Activated CD4-positive, alpha-beta memory T cell treated with anti-CD3 and anti-CD28 coated beads, Interleukin-2, amount 10 ng/mL, durations not matched to agents 7 days and 5 days (primary cell): ENCODE measurements at regions of chr16 and their contacts with region 1.

Region 1: DNA sequence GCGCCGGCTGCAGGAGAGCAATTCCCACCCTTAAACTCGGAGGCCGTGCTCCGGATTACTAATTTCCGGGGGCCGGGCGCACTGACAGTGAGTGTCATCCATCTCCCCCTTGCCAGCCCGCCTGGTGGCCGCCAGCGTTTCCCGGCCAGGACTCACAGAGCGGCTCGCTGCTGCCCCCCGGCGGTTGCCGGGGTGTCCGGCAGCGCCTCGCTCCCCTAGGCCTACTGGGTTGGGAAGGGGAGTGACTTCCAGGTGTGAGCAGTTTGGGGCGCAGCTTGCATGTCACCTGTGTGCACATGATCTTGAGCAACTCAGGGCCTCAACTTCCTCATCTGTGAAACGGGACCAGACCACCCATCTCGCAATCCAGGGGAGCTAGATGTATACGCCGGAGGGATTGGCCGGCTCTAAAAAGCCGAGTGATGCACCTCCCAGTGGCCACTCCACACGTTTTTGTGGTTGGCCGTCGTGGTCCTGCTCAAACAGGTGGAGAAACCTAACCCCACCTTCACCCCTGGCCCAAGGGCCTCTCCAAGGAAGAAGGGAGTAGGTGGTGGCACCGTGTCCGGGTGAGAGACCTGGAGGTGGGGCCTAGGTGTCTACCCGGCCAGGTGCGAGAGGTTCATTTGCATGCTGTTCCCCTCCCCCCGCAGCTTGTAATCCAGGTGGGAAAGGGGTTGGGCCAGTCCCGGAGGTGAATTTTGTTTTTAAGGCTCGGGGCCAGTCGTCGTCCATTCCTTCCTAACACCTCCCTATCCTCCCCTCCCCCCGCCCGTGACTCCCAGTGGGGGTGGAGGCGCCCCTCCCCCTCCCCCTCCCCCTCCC is 2.4 kb upstream of the GSE1 start:
- DNase-seq: peak; percentile 85
- H3K4me3 Mint-ChIP-seq: peak overlapping the region; percentile 63
- H3K27ac Mint-ChIP-seq: peak overlapping the region; percentile 40
- H3K4me1 Mint-ChIP-seq: peaks cover 33% of the 10 kb centered on the region
- H3K27me3 Mint-ChIP-seq: peaks cover 9% of the 10 kb centered on the region

Region 2: DNA sequence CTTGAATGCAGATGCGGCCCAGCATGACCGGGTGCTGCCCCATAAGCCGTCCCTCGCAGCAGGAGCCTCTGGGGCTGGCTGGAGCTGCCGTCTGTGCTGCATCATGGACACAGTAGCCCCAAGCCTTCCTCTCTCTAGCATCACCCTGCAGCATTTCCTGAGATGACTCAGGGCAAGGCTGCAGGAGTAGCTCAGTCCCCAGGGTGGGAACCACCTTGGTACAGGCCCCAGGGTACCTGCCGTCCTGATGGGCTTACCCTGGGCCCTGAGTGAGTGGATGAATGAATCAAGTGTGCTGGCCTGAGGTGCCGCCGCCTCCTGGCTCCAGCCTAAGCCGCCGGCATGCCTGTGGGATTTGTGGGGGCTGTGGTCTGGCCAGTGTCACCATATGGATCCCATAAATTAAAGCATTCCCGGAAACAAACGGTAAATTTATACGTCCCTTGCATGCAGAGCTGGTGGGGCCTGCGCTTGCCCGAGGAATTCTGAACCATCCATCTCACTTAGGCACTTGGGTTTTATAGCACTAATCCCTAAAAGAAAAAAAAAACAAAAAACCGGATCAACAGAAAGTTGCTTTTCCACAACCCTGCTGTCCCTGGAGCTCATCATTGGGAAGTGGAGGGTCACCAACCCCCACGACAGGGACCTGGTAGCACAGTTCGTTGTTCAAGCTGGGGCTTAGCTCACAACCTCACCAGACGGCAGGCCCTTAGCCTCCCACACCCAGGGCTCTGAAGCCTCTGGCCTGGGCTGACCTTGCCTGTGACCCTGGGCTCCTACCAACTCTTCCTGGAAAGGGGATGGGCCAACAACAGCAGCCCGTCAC is 255.8 kb before region 1 on chr16:
- CTCF ChIA-PET with region 1: no interaction called
- POLR2A ChIA-PET with region 1: no interaction called
- DNase-seq: no peak
- H3K4me3 Mint-ChIP-seq: no peak overlapping the region
- H3K27ac Mint-ChIP-seq: no peak overlapping the region
- H3K4me1 Mint-ChIP-seq: no peaks in the 10 kb centered on the region
- H3K27me3 Mint-ChIP-seq: peaks cover 2% of the 10 kb centered on the region

Region 3: DNA sequence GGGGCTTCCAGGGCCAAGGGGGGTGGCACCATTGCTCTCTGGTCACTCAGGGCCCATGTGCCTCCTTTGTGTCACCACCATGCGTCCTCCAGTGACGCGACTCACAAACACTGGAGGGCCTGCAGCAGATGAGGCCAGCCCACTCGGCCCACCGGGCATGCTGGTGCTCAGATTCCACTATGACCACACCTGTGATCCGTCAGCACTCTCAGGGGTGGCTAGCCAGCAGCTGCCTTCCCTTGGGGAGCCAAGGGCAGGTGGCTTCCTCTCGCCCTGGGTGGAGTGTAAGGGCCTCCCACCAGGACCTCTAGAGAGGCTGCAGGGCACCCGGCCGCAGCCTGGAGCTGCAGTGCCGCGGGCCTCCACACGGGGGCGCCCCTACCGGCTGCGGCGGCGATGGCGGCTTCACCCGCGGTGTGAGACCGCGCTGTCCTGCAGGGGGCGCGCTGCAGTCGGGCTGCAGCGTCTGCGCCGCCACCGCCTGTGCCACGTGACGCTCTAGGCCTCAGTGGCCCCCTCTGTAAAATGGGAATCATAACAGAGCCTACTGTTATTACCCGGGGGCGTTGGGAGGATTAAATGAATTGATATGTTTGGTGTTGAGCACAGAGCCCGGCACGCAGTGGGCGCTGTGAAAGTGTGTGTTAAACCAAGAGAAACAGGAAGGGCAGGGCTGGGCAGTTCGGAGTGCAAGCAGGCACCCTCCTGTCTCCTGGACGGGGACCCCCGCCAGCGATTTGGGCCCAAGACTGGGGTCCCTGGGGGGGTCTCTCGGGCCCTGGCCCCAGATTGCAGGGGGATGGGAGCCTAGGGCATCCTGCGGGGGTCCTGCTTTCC is 190.0 kb before region 1 on chr16:
- CTCF ChIA-PET with region 1: interaction called, 44 read pairs
- POLR2A ChIA-PET with region 1: interaction called, 5 read pairs
- DNase-seq: peak; percentile 76
- H3K4me3 Mint-ChIP-seq: no peak overlapping the region
- H3K27ac Mint-ChIP-seq: no peak overlapping the region
- H3K4me1 Mint-ChIP-seq: peaks cover 2% of the 10 kb centered on the region
- H3K27me3 Mint-ChIP-seq: no peaks in the 10 kb centered on the region

Region 4: GRCh38 chr16:85479972-85480751 is 130.6 kb before region 1 on chr16:
- CTCF ChIA-PET with region 1: interaction called, 10 read pairs
- POLR2A ChIA-PET with region 1: no interaction called
- DNase-seq: no peak
- H3K4me3 Mint-ChIP-seq: no peak overlapping the region
- H3K27ac Mint-ChIP-seq: no peak overlapping the region
- H3K4me1 Mint-ChIP-seq: no peaks in the 10 kb centered on the region
- H3K27me3 Mint-ChIP-seq: no peaks in the 10 kb centered on the region

Region 5: GRCh38 chr16:85554112-85554813 is 56.5 kb before region 1 on chr16:
- CTCF ChIA-PET with region 1: interaction called, 25 read pairs
- POLR2A ChIA-PET with region 1: interaction called, 41 read pairs
- DNase-seq: peak; percentile 89
- H3K4me3 Mint-ChIP-seq: peak overlapping the region; percentile 93
- H3K27ac Mint-ChIP-seq: peak overlapping the region; percentile 98
- H3K4me1 Mint-ChIP-seq: peaks cover 38% of the 10 kb centered on the region
- H3K27me3 Mint-ChIP-seq: peaks cover 5% of the 10 kb centered on the region

Region 6: DNA sequence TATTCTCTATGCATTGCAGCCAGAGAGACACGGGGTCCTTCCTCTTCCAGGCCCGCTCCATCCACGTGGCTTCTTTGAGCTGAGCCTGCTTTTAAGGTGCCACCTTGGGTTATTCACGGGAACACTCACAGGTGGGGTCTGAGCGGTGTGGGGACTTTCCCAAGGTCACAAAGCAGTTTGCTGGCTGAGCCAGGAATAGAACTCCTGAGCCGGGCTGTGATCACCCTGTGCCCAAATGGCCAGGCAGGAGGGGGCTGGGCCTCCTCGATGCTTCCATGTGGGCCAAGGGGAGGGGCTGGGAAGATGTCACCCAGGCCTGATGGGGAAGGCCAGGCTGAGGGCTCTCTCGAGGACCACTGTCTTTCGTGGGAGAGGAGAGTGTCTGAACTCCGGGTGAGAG is 10.6 kb before region 1 on chr16:
- CTCF ChIA-PET with region 1: no interaction called
- POLR2A ChIA-PET with region 1: no interaction called
- DNase-seq: no peak
- H3K4me3 Mint-ChIP-seq: no peak overlapping the region
- H3K27ac Mint-ChIP-seq: no peak overlapping the region
- H3K4me1 Mint-ChIP-seq: no peaks in the 10 kb centered on the region
- H3K27me3 Mint-ChIP-seq: no peaks in the 10 kb centered on the region